ENCODE measurements at regions of chr16 and their contacts with region 1.

Region 1: DNA sequence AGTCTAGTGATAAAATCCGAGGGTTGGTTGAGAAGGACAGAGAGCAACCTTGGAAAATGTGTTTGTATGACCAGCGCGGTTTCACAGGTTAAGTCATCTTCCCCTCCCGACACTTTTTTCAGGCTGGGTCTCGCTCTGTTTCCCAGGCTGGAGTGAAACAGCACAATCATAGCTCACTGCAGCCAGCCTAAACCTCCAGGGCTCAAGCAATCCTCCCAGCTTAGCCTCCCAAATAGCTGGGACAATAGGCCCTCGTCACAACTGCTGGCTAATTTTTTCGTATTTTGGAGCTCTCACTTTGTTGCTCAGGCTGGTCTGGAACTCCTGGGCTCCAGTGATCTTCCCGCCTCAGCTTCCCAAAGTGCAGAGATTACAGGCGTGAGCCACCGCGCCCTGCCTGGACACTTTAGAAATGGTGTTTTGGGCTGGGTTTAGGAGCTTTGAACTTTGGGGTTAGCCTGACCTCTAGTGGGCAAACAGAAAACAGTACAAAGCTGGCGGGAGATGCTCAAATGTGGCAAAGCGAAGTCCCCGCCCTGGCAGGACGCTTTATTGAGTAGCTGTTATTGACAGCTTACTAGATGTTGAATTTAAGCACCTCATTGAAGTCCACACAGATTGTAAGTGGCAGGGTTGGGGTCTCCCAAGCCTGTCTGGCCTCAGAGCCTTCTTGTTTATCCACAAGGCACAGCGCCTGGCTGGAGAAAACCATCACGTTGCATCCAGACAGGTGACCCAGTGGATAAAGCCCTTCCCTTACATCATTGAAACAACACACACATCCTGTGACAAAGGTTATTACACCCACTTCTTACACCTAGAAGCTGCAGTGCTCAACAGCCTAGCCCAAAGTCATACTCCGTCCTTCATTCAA is 34.7 kb upstream of the RBBP6 start:
- DNase-seq: peak; percentile 49
- H3K4me3 ChIP-seq: no peak overlapping the region
- H3K27ac ChIP-seq: no peak overlapping the region
- H3K4me1 ChIP-seq: no peaks in the 10 kb centered on the region
- H3K27me3 ChIP-seq: peaks cover 2% of the 10 kb centered on the region
- CTCF ChIP-seq: peak; percentile 70 to 74

Region 2: GRCh38 chr16:23739516-23739915 is 765.2 kb before region 1 on chr16:
- CTCF ChIA-PET with region 1: no interaction called
- dilution Hi-C with region 1: no loop called
- in situ Hi-C with region 1: no loop called
- intact Hi-C with region 1: loop called (anchors 5 kb)
- DNase-seq: no peak
- H3K4me3 ChIP-seq: no peak overlapping the region
- H3K27ac ChIP-seq: no peak overlapping the region
- H3K4me1 ChIP-seq: no peaks in the 10 kb centered on the region
- H3K27me3 ChIP-seq: peaks cover 3% of the 10 kb centered on the region
- CTCF ChIP-seq: no peak

Region 3: GRCh38 chr16:23784811-23785447 is 719.8 kb before region 1 on chr16:
- CTCF ChIA-PET with region 1: no interaction called
- dilution Hi-C with region 1: no loop called
- in situ Hi-C with region 1: loop called in 1 of 2 experiments (anchors 25 kb)
- intact Hi-C with region 1: no loop called
- DNase-seq: peak; percentile 88
- H3K4me3 ChIP-seq: no peak overlapping the region
- H3K27ac ChIP-seq: no peak overlapping the region
- H3K4me1 ChIP-seq: no peaks in the 10 kb centered on the region
- H3K27me3 ChIP-seq: peaks cover 2% of the 10 kb centered on the region
- CTCF ChIP-seq: no peak

Region 4: GRCh38 chr16:23803591-23804123 is 701.1 kb before region 1 on chr16:
- CTCF ChIA-PET with region 1: no interaction called
- dilution Hi-C with region 1: no loop called
- in situ Hi-C with region 1: loop called (anchors 25 kb)
- intact Hi-C with region 1: loop called (anchors 1 kb)
- DNase-seq: peak; percentile 38
- H3K4me3 ChIP-seq: no peak overlapping the region
- H3K27ac ChIP-seq: no peak overlapping the region
- H3K4me1 ChIP-seq: no peaks in the 10 kb centered on the region
- H3K27me3 ChIP-seq: no peaks in the 10 kb centered on the region
- CTCF ChIP-seq: peak; percentile 70 to 85

Region 5: GRCh38 chr16:24041826-24042631 is 462.7 kb before region 1 on chr16:
- CTCF ChIA-PET with region 1: interaction called, 7 read pairs
- dilution Hi-C with region 1: no loop called
- in situ Hi-C with region 1: loop called (anchors 5 kb)
- intact Hi-C with region 1: loop called (anchors 1 kb)
- DNase-seq: peak; percentile 44
- H3K4me3 ChIP-seq: no peak overlapping the region
- H3K27ac ChIP-seq: no peak overlapping the region
- H3K4me1 ChIP-seq: no peaks in the 10 kb centered on the region
- H3K27me3 ChIP-seq: no peaks in the 10 kb centered on the region
- CTCF ChIP-seq: peak; percentile 69 to 87

Region 6: DNA sequence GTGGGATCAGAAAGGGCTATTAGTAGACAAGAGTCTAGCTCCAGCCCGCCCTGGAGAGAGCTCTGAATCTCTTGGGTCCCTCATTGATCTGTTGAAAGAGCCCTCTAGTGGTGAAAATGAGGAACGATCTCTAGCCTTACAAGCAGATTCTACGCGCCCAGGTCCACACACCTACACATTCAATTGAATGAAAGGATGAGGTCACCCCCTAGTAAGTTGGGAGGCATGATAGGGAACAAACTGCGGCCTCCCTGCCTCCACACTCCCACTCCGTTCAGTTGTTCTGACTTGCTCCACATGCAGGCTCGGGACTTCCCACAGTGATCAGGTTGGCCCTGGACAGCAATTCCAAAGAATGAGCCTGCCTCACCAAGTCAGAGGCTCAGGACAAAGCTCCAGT is 251.5 kb before region 1 on chr16:
- CTCF ChIA-PET with region 1: no interaction called
- dilution Hi-C with region 1: no loop called
- in situ Hi-C with region 1: no loop called
- intact Hi-C with region 1: loop called (anchors 5 kb)
- DNase-seq: peak; percentile 32
- H3K4me3 ChIP-seq: no peak overlapping the region
- H3K27ac ChIP-seq: no peak overlapping the region
- H3K4me1 ChIP-seq: no peaks in the 10 kb centered on the region
- H3K27me3 ChIP-seq: no peaks in the 10 kb centered on the region
- CTCF ChIP-seq: peak; percentile 56 to 70

Region 7: DNA sequence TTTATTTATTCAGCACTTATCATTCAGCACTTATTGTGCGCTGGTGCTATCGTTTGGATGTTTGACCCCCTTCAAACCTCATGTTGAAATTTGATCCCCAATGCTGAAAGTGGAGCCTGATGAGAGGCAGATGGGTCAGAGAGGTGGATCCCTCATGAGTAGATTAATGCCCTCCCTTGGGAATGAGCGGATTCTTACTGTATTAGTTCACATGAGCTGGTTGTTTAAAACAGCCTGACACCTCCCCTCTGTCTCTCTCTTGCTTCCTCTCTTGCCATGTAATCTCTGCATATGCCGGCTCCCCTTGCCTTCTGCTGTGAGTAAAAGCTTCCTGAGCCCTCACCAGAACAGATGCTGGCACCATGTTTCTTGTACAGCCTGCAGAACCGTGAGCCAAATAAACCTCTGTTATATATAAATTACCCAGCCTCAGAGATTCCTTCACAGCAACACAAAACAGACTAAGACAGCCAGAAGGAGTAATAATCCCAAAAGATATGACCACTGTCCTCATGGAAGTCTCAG is 137.5 kb before region 1 on chr16:
- CTCF ChIA-PET with region 1: no interaction called
- dilution Hi-C with region 1: no loop called
- in situ Hi-C with region 1: no loop called
- intact Hi-C with region 1: no loop called
- DNase-seq: no peak
- H3K4me3 ChIP-seq: no peak overlapping the region
- H3K27ac ChIP-seq: no peak overlapping the region
- H3K4me1 ChIP-seq: no peaks in the 10 kb centered on the region
- H3K27me3 ChIP-seq: no peaks in the 10 kb centered on the region
- CTCF ChIP-seq: no peak

Region 8: GRCh38 chr16:24409049-24409448 is 95.7 kb before region 1 on chr16:
- CTCF ChIA-PET with region 1: no interaction called
- dilution Hi-C with region 1: no loop called
- in situ Hi-C with region 1: no loop called
- intact Hi-C with region 1: loop called (anchors 1 kb)
- DNase-seq: no peak
- H3K4me3 ChIP-seq: no peak overlapping the region
- H3K27ac ChIP-seq: no peak overlapping the region
- H3K4me1 ChIP-seq: no peaks in the 10 kb centered on the region
- H3K27me3 ChIP-seq: no peaks in the 10 kb centered on the region
- CTCF ChIP-seq: peak in 1 of 2 donors; percentile 18

Region 9: DNA sequence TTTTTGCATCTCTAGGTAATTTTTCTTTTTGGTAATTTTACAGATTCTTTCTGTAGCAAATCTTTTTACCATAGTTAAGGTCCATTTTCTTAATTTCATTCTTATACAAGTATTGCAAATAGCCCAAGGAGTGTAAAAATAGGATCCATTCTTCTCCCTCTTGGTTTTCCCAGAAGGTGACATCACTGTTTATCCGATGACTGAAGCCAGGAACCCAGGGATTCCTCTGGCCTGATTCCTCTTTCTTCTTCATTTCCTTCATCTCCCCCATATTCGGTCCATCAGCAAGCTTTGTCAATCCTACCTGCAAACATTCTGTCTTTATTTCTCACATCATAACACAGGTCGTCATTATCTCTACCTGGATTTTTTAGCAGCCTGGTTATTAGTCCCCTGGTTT is 39.9 kb after region 1 on chr16:
- CTCF ChIA-PET with region 1: no interaction called
- dilution Hi-C with region 1: no loop called
- in situ Hi-C with region 1: no loop called
- intact Hi-C with region 1: no loop called
- DNase-seq: no peak
- H3K4me3 ChIP-seq: no peak overlapping the region
- H3K27ac ChIP-seq: no peak overlapping the region
- H3K4me1 ChIP-seq: peaks cover 15% of the 10 kb centered on the region
- H3K27me3 ChIP-seq: no peaks in the 10 kb centered on the region
- CTCF ChIP-seq: no peak

Region 10: DNA sequence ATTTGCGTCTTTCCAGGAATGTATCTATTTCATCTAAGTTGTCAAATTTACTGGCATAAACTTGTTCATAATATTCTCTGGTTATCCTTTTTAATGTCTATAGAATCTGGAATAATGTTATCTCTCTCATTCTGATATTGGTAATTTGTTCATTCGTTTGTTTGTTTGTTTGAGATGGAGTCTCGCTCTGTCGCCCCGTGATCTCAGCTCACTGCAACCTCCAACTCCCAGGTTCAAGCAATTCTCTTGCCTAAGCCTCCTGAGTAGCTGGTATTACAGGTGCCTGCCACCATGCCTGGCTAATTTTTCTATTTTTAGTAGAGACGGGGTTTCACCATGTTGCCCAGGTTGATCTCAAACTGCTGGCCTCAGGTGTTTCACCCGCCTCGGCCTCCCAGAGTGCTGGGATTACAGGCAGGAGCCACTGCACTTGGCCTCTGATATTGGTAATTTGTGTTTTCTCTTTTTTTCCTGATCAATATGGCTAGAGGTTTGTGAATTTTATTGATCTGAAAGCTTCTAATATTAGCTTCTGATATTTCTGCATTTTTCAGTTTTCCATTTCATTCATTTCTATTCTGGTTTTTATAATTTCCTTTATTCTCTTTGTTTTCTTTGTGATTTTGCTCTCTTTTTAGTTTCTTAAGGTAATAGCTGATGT is 94.2 kb after region 1 on chr16:
- CTCF ChIA-PET with region 1: no interaction called
- dilution Hi-C with region 1: no loop called
- in situ Hi-C with region 1: no loop called
- intact Hi-C with region 1: no loop called
- DNase-seq: no peak
- H3K4me3 ChIP-seq: no peak overlapping the region
- H3K27ac ChIP-seq: no peak overlapping the region
- H3K4me1 ChIP-seq: no peaks in the 10 kb centered on the region
- H3K27me3 ChIP-seq: no peaks in the 10 kb centered on the region
- CTCF ChIP-seq: no peak

Measured in mammary epithelial cell (primary cell).